ENCODE measurements at regions of chr1 and their contacts with region 1.

Region 1: GRCh38 chr1:10796019-10796944 is at the start of gene CASZ1:
- DNase-seq: peak; percentile 81 to 82
- ATAC-seq: peak; percentile 57
- total RNA-seq, gene CASZ1: 61.3 to 63.8 TPM

Region 2: GRCh38 chr1:10694633-10695627 is 101.4 kb before region 1 on chr1:
- intact Hi-C with region 1: loop called in 1 of 2 experiments (anchors 10 kb)
- DNase-seq: peak; percentile 89 to 91
- ATAC-seq: peak; percentile 59

Region 3: GRCh38 chr1:10709165-10709564 is 87.1 kb before region 1 on chr1:
- intact Hi-C with region 1: no loop called
- DNase-seq: no peak
- ATAC-seq: no peak